ENCODE measurements at regions of chr11 and their contacts with region 1.

Region 1: GRCh38 chr11:68459886-68460740 is 439 bp upstream of the PPP6R3 start:
- DNase-seq: peak; percentile 99 to 100
- H3K4me3 ChIP-seq: peak overlapping the region; percentile 50 to 96 (median 91)
- H3K27ac ChIP-seq: peak overlapping the region; percentile 91 to 97 (median 95)
- H3K4me1 ChIP-seq: peaks cover 31 to 46% of the 10 kb centered on the region in 2 donors
- H3K27me3 ChIP-seq: no peaks in the 10 kb centered on the region
- CTCF ChIP-seq: peak in 3 of 6 experiments; percentile 6 to 38 (median 25)
- POLR2A ChIP-seq: no peak

Region 2: DNA sequence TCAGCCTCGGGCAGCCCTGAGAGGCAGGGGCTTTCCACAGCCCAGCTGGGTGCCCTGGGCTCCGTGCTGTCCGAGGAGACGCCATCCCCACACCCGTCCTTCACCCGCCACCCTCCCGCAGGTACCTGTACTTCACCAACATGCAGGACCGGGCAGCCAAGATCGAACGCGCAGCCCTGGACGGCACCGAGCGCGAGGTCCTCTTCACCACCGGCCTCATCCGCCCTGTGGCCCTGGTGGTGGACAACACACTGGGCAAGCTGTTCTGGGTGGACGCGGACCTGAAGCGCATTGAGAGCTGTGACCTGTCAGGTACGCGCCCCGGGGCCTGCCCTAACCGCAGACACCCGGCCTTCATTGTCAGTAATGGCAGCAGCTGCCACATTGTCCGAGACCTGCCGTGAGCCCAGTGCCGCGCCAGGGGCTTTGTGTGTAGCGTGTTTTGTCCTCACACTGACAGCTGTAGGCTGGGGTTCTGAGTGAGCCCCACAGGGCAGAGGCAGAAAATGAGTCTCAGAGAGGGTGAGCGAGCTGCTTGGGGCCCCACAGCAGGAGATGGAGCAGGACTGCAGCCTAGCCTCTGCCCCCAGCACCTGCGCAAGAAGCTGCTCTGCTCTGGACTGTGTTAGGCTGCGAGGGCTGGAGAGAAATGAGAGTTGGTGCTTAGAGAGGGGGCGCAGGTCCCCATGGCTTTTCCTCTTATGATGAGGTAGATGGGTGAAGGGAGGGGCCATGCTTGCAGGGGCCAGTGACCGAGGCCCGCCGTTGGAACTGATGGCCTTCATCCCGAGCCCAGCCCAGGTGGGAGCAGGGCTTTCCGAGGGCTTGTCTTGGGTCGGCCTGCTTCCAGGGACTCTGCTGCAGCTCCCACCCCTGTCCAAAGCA is 34.9 kb before region 1 on chr11:
- intact Hi-C with region 1: no loop called
- DNase-seq: no peak
- H3K4me3 ChIP-seq: no peak overlapping the region
- H3K27ac ChIP-seq: no peak overlapping the region
- H3K4me1 ChIP-seq: no peaks in the 10 kb centered on the region
- H3K27me3 ChIP-seq: no peaks in the 10 kb centered on the region
- CTCF ChIP-seq: no peak
- POLR2A ChIP-seq: no peak

Region 3: GRCh38 chr11:68609761-68610160 is 149.6 kb after region 1 on chr11:
- intact Hi-C with region 1: loop called (anchors 10 kb)
- DNase-seq: no peak
- H3K4me3 ChIP-seq: no peak overlapping the region
- H3K27ac ChIP-seq: peak overlapping the region in 1 of 3 donors; percentile 49
- H3K4me1 ChIP-seq: peaks cover 0 to 9% of the 10 kb centered on the region in 2 donors
- H3K27me3 ChIP-seq: no peaks in the 10 kb centered on the region
- CTCF ChIP-seq: no peak
- POLR2A ChIP-seq: no peak

Measured in thyroid gland (tissue), 4 donors.